ENCODE measurements at regions of chr6 and their contacts with region 1.

Region 1: DNA sequence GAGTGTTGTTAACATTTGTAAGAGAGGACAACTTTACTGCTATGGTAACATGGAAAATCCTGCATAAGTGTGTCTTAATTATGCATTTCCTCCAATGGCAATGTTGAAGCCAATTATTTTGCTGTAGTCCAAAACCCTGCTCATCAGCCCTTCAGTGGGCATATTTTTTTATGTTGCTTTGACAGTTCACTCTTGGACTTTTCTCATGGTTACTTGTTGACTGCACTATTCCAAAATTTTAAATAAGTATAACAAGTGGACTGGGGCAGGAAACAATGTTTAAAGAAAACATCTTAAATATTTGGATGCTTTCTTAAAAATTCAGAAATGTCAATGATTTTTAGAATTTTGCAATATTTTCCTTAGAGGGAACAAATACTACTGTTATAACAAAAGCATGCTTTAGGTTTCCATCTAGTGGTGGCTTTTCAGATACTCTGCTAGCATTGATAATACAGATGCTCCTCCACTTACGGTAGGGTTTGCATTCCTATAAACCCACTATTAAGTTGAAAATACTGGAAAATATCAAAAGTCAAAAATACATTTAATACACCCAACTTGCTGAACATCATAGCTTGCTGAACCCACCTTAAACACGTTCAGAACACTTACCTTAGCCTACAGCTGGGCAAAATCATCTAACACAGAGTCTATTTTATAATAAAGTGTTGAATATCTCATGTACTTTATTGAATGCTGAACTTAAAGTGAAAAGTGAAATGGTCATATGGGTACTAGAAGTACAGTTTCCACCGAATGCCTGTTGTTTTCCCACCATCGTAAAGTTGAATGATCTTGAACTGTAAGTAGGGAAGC is 86.4 kb downstream of the ADGRG6 start:
- DNase-seq: peak in 1 of 2 experiments; percentile 66
- H3K4me3 ChIP-seq: no peak overlapping the region
- H3K27ac ChIP-seq: no peak overlapping the region
- H3K4me1 ChIP-seq: peaks cover 17% of the 10 kb centered on the region
- H3K27me3 ChIP-seq: no peaks in the 10 kb centered on the region
- CTCF ChIP-seq: peak; percentile 84

Region 2: DNA sequence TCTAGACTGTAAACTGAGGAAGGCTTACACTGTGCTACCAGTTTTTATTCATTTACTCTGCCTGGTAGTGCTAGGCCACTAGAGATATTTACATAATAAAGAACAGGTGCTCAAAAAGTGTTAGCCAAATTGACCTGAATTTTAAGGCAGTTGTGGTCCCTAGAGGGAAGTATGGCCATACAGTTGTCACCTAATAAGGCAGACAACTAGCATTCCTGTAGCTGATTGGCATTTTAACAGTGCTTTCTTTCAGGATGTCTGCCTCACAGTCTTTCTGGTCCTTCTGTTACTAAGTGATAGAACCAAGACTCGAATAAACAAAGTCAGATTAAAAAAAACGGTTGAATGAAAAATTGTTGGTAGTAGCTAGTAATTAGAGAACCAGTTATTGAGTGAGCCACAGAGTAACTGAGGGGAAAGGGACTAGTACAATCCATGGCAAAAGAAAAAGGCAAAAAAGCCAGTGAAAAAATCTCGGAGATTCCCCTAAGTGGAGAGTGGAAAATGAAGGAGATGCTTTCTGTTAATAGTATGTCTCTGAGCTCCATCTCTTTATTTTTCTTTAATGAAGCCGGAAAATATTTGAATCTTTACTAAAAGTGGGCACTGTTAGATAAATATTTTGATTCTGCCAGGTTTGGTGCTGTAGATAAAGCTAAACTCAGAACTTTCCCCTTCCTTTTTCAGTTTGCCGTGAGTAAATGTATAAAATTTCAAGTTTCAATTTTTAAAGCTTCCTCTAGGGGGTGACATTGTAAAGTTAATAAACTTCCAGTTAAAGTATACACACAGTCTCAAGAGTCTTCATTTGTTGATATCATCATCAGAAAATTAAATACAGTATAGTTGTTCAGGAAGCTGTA is 232.1 kb before region 1 on chr6:
- CTCF ChIA-PET with region 1: interaction called, 3 read pairs
- POLR2A ChIA-PET with region 1: no interaction called
- intact Hi-C with region 1: loop called (anchors 2 kb)
- DNase-seq: no peak
- H3K4me3 ChIP-seq: no peak overlapping the region
- H3K27ac ChIP-seq: no peak overlapping the region
- H3K4me1 ChIP-seq: no peaks in the 10 kb centered on the region
- H3K27me3 ChIP-seq: no peaks in the 10 kb centered on the region
- CTCF ChIP-seq: peak; percentile 74

Region 3: GRCh38 chr6:142218446-142218845 is 169.8 kb before region 1 on chr6:
- CTCF ChIA-PET with region 1: interaction called, 5 read pairs
- POLR2A ChIA-PET with region 1: no interaction called
- intact Hi-C with region 1: loop called (anchors 10 kb)
- DNase-seq: no peak
- H3K4me3 ChIP-seq: no peak overlapping the region
- H3K27ac ChIP-seq: no peak overlapping the region
- H3K4me1 ChIP-seq: no peaks in the 10 kb centered on the region
- H3K27me3 ChIP-seq: no peaks in the 10 kb centered on the region
- CTCF ChIP-seq: no peak

Region 4: DNA sequence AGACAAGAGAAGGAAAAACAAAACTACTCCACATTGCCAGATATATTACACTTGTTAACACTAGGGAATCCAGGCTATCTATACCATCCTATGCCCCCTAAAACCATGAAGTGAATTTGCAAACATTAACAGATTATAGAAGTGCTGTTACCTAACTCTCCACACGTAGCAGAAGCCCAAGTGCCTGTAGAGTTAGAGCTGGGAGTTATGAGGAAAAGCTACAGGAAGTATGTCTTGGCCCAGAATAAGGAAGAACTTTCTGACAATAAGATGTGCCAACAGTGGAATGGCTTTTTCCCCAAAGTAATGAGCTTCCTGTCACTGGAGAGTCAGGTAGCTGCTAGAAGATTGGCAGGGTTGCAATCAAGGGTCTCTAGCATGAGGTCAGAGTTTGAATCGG is 53.9 kb before region 1 on chr6:
- CTCF ChIA-PET with region 1: no interaction called
- POLR2A ChIA-PET with region 1: no interaction called
- intact Hi-C with region 1: no loop called
- DNase-seq: no peak
- H3K4me3 ChIP-seq: no peak overlapping the region
- H3K27ac ChIP-seq: no peak overlapping the region
- H3K4me1 ChIP-seq: peaks cover 4% of the 10 kb centered on the region; the same call in 1 of the 2 replicates
- H3K27me3 ChIP-seq: no peaks in the 10 kb centered on the region
- CTCF ChIP-seq: no peak

Region 5: GRCh38 chr6:142444376-142444775 is 56.2 kb after region 1 on chr6:
- CTCF ChIA-PET with region 1: no interaction called
- POLR2A ChIA-PET with region 1: interaction called, 22 read pairs
- intact Hi-C with region 1: no loop called
- DNase-seq: no peak
- H3K4me3 ChIP-seq: no peak overlapping the region
- H3K27ac ChIP-seq: no peak overlapping the region
- H3K4me1 ChIP-seq: no peaks in the 10 kb centered on the region
- H3K27me3 ChIP-seq: no peaks in the 10 kb centered on the region
- CTCF ChIP-seq: no peak

Region 6: GRCh38 chr6:143620447-143620846 is 1232.2 kb after region 1 on chr6:
- CTCF ChIA-PET with region 1: no interaction called
- POLR2A ChIA-PET with region 1: no interaction called
- intact Hi-C with region 1: no loop called
- DNase-seq: no peak
- H3K4me3 ChIP-seq: no peak overlapping the region
- H3K27ac ChIP-seq: no peak overlapping the region
- H3K4me1 ChIP-seq: no peaks in the 10 kb centered on the region
- H3K27me3 ChIP-seq: no peaks in the 10 kb centered on the region
- CTCF ChIP-seq: no peak